ENCODE measurements at regions of chr1 and their contacts with region 1.

Region 1: DNA sequence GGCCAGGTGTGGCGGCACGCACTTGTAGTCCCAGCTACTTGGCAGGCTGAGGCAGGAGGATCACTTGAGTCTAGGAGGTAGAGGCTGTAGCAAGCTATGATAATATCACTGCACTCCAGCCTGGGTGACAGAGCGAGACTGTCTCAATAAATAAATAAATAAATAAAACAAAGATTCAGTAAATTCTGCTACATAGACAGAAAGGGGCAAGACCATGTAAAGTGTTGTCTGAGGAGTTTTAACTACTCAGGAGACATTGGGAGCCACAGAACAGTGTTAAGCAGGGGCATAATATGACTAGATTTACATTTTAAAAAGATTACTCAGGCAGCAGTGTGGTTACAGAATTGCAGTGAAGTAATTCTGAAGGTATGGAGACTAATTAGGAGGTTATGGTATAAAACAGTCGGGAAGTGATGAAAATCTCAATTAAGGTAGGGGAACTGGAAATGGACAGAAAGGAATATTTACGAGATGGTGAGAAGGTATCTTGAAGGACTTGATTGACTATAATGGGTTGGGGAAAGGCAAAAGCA is 94.7 kb downstream of the ATP1B1 start:
- DNase-seq: peak; percentile 58
- H3K4me3 ChIP-seq: no peak overlapping the region
- H3K27ac ChIP-seq: no peak overlapping the region
- H3K4me1 ChIP-seq: peaks cover 26% of the 10 kb centered on the region
- H3K27me3 ChIP-seq: no peaks in the 10 kb centered on the region
- CTCF ChIP-seq: no peak

Region 2: GRCh38 chr1:169155675-169156074 is 45.5 kb before region 1 on chr1:
- CTCF ChIA-PET with region 1: no interaction called
- dilution Hi-C with region 1: loop called (anchors 5 kb)
- in situ Hi-C with region 1: no loop called
- intact Hi-C with region 1: no loop called
- DNase-seq: no peak
- H3K4me3 ChIP-seq: no peak overlapping the region
- H3K27ac ChIP-seq: no peak overlapping the region
- H3K4me1 ChIP-seq: peaks cover 1% of the 10 kb centered on the region
- H3K27me3 ChIP-seq: no peaks in the 10 kb centered on the region
- CTCF ChIP-seq: no peak

Region 3: DNA sequence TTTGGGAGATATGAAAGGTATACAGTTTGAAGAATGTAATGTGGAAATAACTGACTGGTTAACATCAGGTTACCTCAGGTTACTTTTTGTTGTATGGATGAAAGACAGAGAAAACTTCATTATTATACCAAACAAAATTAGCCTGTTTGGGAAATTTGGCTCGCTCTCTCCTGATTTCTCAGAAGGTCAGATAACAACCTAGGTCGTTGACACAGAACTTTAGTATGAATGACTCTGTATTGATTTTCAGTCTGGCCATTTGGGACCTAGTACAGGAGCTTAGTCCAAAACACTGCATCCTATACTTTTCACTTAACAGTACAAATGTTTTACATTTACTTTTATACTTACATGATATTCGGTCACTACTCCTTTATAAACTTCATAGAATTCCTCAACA is 33.6 kb after region 1 on chr1:
- CTCF ChIA-PET with region 1: no interaction called
- dilution Hi-C with region 1: no loop called
- in situ Hi-C with region 1: no loop called
- intact Hi-C with region 1: no loop called
- DNase-seq: no peak
- H3K4me3 ChIP-seq: no peak overlapping the region
- H3K27ac ChIP-seq: no peak overlapping the region
- H3K4me1 ChIP-seq: peaks cover 3% of the 10 kb centered on the region
- H3K27me3 ChIP-seq: no peaks in the 10 kb centered on the region
- CTCF ChIP-seq: no peak

Measured in mammary epithelial cell (primary cell).